CD8-positive, alpha-beta T cell (primary cell): ENCODE measurements at regions of chr10 and their contacts with region 1.

Region 1: DNA sequence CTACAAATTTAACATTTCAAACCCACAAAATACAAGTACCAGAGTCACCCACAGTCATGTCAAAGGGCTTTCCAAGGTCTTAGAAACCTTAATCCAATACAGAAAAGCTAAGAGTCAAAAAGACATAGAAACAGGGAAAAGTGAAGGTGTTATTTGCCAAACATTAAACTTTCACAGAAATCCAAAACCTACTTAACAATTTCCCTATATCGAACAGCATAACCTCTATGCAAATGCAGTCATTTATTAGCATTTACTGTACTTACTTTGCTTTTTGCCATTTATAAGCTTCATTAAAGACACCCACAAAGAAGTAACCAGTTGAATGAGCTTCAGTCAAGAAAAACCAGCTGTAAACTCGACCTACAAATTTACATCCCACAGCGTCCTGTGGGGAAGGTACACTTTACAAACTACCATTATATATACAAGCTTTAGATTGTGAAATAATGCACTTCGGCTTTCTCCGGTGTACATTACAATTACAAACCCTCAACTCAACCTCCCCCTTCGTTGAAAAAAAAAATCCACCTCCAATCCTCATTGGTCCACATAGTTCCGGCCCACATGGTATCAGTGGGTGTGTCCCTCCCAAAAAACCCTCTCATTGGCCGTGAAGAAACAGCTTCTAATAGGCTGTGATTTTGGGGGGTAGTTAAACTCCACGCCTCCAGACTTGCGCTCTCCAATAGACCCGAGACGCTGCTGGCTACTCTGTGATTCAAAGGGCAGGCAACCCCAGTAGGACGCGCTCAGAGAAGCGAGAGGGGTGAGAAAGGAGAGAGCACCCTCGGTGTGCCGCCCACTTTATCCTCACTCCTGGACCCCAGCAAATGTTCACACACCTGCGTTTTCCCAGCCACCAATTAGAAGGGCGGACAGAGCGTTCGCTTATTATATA is 1.4 kb downstream of the PANK1 start:
- DNase-seq: peak in 8 of 9 experiments; percentile 25 to 90 (median 56)
- ATAC-seq: peak; percentile 91
- H3K4me3 ChIP-seq: peak overlapping the region; percentile 45 to 57
- H3K4me3 Mint-ChIP-seq: no peak overlapping the region
- H3K27ac ChIP-seq: no peak overlapping the region
- H3K27ac Mint-ChIP-seq: no peak overlapping the region
- H3K4me1 ChIP-seq: peaks cover 9% of the 10 kb centered on the region
- H3K4me1 Mint-ChIP-seq: peaks cover 8% of the 10 kb centered on the region
- H3K27me3 ChIP-seq: no peaks in the 10 kb centered on the region
- H3K27me3 Mint-ChIP-seq: peaks cover 13% of the 10 kb centered on the region
- CTCF ChIP-seq: no peak

Region 2: DNA sequence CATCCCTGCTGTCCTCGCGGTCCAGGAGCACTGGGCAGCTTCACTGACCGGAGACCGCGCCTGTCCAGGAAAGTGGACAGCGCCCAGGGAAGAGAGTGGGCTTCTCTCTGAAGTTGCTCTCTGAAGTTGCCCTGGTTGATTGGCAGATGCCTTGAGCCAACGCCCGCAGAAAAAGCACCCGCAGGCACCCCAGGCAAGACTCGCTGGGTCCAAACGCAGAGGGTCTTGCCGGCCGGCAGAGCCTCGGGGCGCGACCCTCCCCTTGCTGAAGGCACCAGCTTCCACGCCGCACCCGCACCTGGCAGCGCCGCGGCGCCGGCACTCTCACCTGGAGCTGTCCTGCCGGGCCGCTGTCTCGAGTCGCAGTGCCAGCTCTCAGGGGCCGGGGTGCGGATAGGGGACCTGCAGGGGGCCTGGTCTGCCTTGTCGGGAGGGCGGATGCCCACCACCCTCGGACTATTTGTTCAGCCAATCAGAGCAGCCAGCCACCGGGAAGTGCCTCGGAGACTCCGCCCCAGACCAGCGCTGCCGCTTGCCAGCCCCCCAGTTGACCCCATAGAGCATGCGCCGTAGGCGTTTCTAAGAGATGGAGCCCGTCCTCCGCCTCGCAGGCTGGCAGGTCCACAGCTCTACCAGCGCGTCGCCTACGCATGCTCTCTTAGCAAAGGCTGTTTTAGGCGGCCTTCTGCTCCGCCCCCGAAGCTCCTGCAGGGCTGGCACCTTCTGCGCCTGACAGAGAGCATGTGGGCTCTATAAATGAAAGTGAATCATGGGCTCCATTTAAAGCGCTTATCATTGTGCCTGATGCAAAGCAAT is 392.1 kb before region 1 on chr10 and contains the start of gene LIPA:
- CTCF ChIA-PET with region 1: no interaction called
- POLR2A ChIA-PET with region 1: interaction called, 6 read pairs
- intact Hi-C with region 1: loop called in 1 of 2 experiments (anchors 2 kb)
- DNase-seq: peak; percentile 93 to 99 (median 96)
- ATAC-seq: peak; percentile 96
- H3K4me3 ChIP-seq: peak within 1 kb of the TSS; percentile 82 to 84
- H3K4me3 Mint-ChIP-seq: peak within 1 kb of the TSS; percentile 90
- H3K27ac ChIP-seq: peak within 1 kb of the TSS; percentile 63 to 65
- H3K27ac Mint-ChIP-seq: peak within 1 kb of the TSS; percentile 88
- H3K4me1 ChIP-seq: peaks cover 12% of the 10 kb centered on the region
- H3K4me1 Mint-ChIP-seq: peaks cover 23% of the 10 kb centered on the region
- H3K27me3 ChIP-seq: no peaks in the 10 kb centered on the region
- H3K27me3 Mint-ChIP-seq: peaks cover 2% of the 10 kb centered on the region
- CTCF ChIP-seq: no peak
- total RNA-seq, gene LIPA: 9.7 to 12.1 TPM